ENCODE measurements at regions of chr19 and their contacts with region 1.

Region 1: GRCh38 chr19:55452749-55453346 is 8.6 kb downstream of the ISOC2 start:
- DNase-seq: peak; percentile 95
- ATAC-seq: peak; percentile 84
- H3K4me3 Mint-ChIP-seq: peak overlapping the region; percentile 74
- H3K27ac Mint-ChIP-seq: no peak overlapping the region
- H3K4me1 Mint-ChIP-seq: peaks cover 8% of the 10 kb centered on the region
- H3K27me3 Mint-ChIP-seq: peaks cover 32% of the 10 kb centered on the region
- CTCF ChIP-seq: no peak; the same call in 1 of the 2 replicates

Region 2: GRCh38 chr19:55437410-55438075 is 15.3 kb before region 1 on chr19:
- CTCF ChIA-PET with region 1: interaction called, 13 read pairs
- POLR2A ChIA-PET with region 1: no interaction called
- DNase-seq: peak; percentile 85
- ATAC-seq: peak; percentile 73
- H3K4me3 Mint-ChIP-seq: no peak overlapping the region
- H3K27ac Mint-ChIP-seq: no peak overlapping the region
- H3K4me1 Mint-ChIP-seq: peaks cover 15% of the 10 kb centered on the region
- H3K27me3 Mint-ChIP-seq: peaks cover 11% of the 10 kb centered on the region
- CTCF ChIP-seq: no peak

Measured in WTC11 (cell line).